Left cardiac atrium (tissue), 4 donors: ENCODE measurements at regions of chr12 and their contacts with region 1.

Region 1: GRCh38 chr12:121494093-121494787 is 86.6 kb downstream of the KDM2B start:
- DNase-seq: peak; percentile 42
- ATAC-seq: peak; percentile 41 to 53

Region 2: DNA sequence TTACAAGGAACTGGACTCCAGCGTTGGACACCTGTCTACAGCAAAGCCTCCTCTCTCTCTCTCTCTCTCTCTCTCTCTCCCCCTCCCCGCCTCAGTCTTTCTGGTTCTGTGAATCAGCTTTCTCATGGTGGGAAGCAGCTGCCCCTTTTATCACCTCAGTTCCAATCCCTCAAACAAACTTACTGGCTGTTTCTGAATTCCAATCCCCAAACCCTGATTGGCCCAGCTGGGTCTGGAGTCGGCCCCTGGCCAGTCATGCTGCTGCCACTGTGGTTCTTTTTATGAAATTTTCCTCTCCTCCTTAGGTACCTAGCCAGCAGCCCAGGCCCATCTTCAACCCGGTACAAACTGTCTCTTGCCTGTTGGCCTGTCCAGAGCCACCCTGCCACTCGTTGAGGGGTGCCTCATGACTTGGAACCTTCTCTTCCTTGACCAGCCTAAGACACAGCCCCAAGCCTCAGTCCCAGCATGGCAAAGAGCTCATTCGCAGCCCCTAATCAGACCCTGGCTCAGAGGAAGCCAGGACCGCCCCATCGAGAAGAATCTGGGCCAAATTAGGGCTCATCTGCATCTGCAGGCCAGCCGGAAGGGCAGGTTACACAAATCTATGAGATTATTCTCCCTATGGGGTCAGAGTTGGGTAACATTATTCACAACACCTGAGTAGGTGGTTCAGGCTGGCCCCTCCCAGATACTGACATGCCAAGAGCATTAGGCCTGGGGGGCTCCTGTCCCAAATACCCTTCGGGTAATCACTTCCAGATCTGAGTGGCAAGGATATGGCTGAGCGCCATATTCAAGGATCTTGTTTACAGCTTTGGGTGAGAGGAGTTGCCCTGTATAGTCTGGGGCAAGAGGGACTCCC is 184.7 kb after region 1 on chr12:
- intact Hi-C with region 1: loop called (anchors 5 kb)
- DNase-seq: no peak
- ATAC-seq: no peak